ENCODE measurements at regions of chr2 and their contacts with region 1.

Region 1: DNA sequence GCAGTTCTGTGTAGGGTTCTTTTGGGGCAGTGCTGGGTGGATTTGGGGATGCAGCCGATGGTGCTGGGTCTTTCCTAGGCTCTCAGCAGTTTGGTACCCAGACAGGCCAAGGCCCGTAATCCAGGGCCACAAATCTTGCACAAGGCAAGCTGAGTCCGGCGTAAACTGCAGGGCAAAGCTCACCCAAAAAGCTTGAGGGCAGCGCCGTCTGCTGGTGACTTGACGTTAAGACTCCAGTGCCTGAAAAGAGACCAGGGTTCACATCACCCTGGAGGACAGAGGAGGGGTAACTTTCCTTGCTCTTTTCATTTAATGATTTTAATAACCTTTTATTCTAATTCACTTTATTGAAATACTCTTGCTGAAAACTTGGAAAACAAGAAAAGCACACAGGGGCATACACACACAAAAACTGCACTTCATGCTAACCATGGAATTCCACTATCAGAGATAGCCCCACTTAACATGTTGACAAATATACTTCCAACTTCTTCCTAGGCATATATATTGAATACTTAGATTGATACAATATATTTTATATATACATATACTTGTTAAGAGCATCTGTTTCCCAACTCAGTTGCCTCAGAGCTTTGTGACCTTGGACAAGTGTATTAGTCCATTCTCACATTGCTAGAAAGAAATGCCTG is 38.9 kb downstream of the CNGA3 start:
- DNase-seq: peak; percentile 81
- ATAC-seq: peak; percentile 77 to 80

Region 2: DNA sequence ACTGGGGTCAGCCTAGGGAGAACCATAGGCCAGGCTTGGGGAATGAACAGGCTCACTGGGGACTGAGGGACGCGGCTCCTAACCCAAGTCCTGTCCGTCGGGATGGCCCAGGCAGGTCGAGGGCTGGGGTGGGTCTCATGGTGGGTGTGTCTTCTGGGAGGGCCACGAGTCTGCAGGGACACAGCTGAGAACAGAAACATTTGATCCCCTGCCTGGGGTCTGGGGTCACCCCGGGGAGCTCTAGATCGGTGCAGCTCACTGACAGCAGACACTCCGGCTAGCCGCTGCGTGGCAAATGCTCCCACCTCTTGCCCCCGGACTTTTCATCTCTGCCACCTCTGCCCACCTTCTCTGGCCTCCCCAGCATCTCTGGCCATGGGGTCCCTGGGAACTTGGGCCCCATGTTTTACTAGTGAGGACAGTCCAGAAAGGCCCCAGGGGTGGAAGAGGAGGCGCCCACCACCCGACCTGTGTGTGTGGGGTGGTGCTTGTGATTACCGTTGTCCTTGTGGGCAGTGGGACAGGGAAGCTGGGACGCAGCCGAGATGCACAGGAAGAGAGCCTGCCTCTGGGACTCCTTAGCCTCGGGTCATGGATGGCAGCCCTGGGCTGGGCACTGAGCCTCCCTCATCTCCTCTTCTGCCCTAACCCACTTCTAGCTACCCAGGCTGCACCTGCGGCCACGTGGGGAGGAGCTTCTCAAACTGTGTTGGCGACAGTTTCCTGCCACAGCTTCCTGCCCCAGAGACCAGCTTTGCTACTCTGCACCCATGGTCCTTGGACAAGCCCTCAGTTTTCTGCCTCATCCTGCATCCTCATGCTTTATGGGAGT is 666.9 kb before region 1 on chr2:
- intact Hi-C with region 1: loop called in 1 of 2 experiments (anchors 10 kb)
- DNase-seq: peak; percentile 22
- ATAC-seq: peak; percentile 15 to 57

Measured in left cardiac atrium (tissue), 4 donors.